ENCODE measurements at regions of chr3 and their contacts with region 1.

Region 1: GRCh38 chr3:30347679-30348216 is 258.7 kb upstream of the TGFBR2 start:
- DNase-seq: peak; percentile 85
- H3K4me3 Mint-ChIP-seq: no peak overlapping the region
- H3K27ac Mint-ChIP-seq: peak overlapping the region; percentile 76
- H3K4me1 Mint-ChIP-seq: peaks cover 54% of the 10 kb centered on the region
- H3K27me3 Mint-ChIP-seq: no peaks in the 10 kb centered on the region
- CTCF ChIP-seq: no peak

Region 2: DNA sequence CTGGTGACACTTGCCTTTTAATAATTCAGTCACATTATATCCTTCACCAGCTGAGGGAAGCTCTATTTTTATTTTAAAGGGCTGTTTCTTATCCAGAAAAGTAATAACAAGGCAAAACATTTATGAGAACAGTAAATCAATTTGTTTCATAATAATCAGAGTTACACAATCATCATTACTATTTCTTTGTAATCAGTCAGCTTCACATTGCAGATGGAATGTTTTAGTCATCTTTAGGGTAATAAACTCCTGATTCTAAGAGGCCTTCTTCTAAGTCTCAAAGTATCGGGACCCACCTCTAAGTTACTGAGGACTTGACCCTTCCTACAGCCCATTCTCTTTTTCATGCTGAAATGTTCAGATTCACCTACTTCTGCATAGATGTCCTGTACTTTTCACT is 39.6 kb before region 1 on chr3:
- CTCF ChIA-PET with region 1: no interaction called
- POLR2A ChIA-PET with region 1: interaction called, 16 read pairs
- intact Hi-C with region 1: no loop called
- DNase-seq: peak; percentile 42
- H3K4me3 Mint-ChIP-seq: no peak overlapping the region
- H3K27ac Mint-ChIP-seq: no peak overlapping the region
- H3K4me1 Mint-ChIP-seq: peaks cover 37% of the 10 kb centered on the region
- H3K27me3 Mint-ChIP-seq: no peaks in the 10 kb centered on the region
- CTCF ChIP-seq: no peak

Region 3: DNA sequence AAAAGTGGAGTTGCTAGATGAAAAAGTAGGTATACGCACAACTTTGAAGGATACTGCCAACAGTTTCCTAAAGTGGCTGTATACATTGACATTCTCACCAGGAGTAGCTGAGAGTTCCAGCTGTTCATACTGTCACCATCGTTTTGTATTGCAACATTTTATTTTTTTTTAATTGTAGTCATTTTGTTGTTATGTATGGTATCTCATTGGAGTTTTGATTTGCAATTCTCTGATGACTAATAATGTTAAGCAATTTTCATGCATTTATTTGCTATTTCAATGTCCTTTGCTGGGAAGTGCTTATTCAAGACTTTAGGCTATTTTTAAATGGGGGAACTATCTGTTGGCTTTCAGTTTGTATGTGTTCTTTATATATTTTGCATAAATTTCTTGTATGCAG is 73.5 kb after region 1 on chr3:
- CTCF ChIA-PET with region 1: no interaction called
- POLR2A ChIA-PET with region 1: interaction called, 3 read pairs
- intact Hi-C with region 1: loop called (anchors 5 kb)
- DNase-seq: peak; percentile 70
- H3K4me3 Mint-ChIP-seq: no peak overlapping the region
- H3K27ac Mint-ChIP-seq: no peak overlapping the region
- H3K4me1 Mint-ChIP-seq: peaks cover 14% of the 10 kb centered on the region
- H3K27me3 Mint-ChIP-seq: no peaks in the 10 kb centered on the region
- CTCF ChIP-seq: no peak